ENCODE measurements at regions of chr19 and their contacts with region 1.

Region 1: GRCh38 chr19:16528073-16528472 is 14.2 kb downstream of the CHERP start:
- DNase-seq: peak; percentile 67
- H3K4me3 Mint-ChIP-seq: no peak overlapping the region
- H3K27ac Mint-ChIP-seq: no peak overlapping the region
- H3K4me1 Mint-ChIP-seq: no peaks in the 10 kb centered on the region
- H3K27me3 Mint-ChIP-seq: no peaks in the 10 kb centered on the region

Region 2: DNA sequence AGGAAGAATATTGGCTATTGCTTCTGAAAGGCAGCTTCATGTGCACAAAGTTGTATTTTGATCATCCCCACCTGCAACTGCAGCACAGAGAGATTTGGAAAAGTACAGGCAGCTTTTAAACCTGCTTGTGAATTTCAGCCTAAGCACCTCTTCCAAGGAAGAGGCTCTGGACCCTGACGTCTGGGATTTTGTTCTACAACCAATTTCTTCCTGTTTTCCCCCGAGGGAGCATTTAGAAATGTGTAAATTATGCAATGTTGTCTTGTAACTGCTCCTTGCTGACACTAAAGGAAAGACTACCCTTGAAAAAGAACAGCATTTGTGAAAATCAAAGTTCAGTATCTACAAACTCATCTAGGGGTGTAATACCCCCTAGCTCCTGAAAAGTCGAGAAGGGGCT is 84.5 kb after region 1 on chr19:
- CTCF ChIA-PET with region 1: interaction called, 3 read pairs
- POLR2A ChIA-PET with region 1: no interaction called
- intact Hi-C with region 1: loop called (anchors 1 kb)
- DNase-seq: no peak
- H3K4me3 Mint-ChIP-seq: no peak overlapping the region
- H3K27ac Mint-ChIP-seq: no peak overlapping the region
- H3K4me1 Mint-ChIP-seq: peaks cover 69% of the 10 kb centered on the region
- H3K27me3 Mint-ChIP-seq: no peaks in the 10 kb centered on the region